Activated naive CD4-positive, alpha-beta T cell treated with anti-CD3 and anti-CD28 coated beads for 36 hours (primary cell): ENCODE measurements at regions of chr6 and their contacts with region 1.

Region 1: DNA sequence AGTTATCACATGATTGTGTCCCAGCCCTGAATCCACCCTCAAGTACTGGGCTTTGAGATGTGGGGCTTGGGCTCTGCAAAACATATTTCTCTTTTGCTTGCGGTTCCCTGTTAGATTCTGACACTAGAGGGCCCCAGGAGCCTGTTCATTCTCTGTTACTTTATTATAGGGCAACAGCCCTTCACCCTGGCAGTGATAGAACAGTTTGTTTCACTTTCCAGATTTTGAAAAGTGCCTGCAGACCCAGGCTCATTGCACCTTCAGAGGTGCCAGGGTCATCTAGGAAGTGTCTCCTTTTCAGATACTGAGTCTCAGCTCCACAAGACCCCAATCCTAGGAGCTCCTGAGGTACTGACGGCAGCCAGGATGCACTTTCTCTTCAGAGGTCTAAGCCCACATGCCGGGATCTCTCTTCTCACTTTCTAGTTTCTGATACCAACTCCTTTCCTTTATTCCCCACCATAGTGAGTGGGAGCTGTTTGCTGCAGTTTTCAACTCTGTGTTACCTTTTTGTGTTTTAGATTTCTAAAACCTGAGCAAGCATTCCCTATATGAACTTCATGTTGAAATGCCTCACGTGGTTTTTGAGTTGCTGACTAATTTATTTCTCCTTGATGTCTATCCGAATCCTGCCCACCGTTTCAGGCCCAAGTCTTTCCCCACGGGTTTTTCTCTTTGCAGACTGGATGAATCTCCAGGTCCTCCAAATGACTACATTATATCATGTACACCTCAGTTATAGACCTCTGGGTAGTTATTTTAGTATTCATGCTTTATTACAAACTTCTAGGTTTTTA is 10.9 kb downstream of the ABT1 start:
- DNase-seq: peak; percentile 79
- H3K4me3 Mint-ChIP-seq: peak overlapping the region; percentile 52
- H3K27ac Mint-ChIP-seq: no peak overlapping the region
- H3K4me1 Mint-ChIP-seq: peaks cover 15% of the 10 kb centered on the region
- H3K27me3 Mint-ChIP-seq: peaks cover 1% of the 10 kb centered on the region

Region 2: DNA sequence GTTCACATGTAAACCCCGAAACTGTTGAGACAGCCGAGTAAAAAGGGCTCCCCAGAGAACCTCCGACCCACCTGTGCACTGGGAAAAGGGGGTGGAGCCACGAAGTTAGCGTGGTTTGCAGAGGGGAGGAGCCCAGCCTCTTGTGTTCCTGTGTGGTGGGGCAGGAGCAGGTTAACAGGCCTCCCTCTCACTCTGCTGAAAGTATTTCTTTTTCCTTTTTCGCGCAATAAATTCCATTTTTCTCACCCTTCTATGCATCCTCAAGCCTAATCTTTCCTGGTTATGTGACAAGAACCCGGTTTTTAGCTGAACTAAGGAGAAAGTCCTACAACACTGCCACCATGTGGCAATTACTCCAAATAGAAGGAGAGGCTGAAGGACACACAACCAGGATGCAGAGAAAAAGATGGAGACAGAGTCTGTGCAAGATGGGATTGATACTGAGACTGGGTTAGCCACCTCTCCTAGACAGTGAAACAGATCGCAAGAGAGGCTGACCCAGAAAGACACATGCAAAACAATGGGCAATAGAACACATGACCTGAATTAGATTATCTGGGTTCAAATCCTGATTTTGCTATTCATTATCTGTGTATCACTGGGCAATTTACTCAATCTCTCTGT is 471.2 kb after region 1 on chr6:
- CTCF ChIA-PET with region 1: interaction called, 5 read pairs
- intact Hi-C with region 1: loop called (anchors 1 kb)
- DNase-seq: peak; percentile 64
- H3K4me3 Mint-ChIP-seq: peak overlapping the region; percentile 67
- H3K27ac Mint-ChIP-seq: no peak overlapping the region
- H3K4me1 Mint-ChIP-seq: peaks cover 2% of the 10 kb centered on the region
- H3K27me3 Mint-ChIP-seq: peaks cover 26% of the 10 kb centered on the region

Region 3: DNA sequence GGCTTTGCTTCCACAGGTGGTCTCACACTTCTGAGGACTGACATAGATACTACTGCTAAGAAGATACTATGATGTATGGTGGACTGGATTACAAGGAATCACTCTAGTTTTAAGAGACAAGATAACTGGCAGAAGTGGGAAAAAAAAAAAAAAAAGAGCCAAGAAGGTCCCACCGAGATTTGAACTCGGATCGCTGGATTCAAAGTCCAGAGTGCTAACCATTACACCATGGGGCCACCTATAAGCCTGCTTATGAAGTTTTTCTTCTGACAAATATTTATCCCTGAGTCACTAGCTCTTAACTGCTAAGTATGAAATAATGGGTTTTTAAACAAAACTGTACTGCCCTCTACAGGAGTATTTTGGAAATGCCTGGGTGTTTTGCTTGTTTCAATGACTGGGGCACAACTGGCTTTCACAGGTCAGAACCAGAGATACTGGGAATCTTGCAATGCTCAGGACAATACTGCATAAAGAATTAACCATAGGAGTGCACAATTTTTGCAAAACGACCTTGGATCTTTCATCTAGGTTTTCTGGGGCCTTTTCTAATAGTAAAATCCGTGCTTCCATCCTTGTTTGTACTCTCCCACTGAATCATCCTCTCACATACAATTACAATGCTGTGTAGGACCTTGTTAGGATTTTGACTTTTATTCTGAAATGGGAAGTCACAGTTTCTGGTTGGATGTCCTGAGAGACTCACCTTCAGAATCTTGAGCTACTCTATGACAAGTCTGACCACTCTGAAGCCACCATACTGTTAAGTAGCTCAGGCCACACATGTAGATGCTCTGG is 1188.3 kb after region 1 on chr6:
- CTCF ChIA-PET with region 1: no interaction called
- intact Hi-C with region 1: loop called (anchors 2 kb)
- DNase-seq: peak; percentile 59
- H3K4me3 Mint-ChIP-seq: no peak overlapping the region
- H3K27ac Mint-ChIP-seq: no peak overlapping the region
- H3K4me1 Mint-ChIP-seq: peaks cover 16% of the 10 kb centered on the region
- H3K27me3 Mint-ChIP-seq: peaks cover 5% of the 10 kb centered on the region